ENCODE measurements at regions of chr1 and their contacts with region 1.

Region 1: DNA sequence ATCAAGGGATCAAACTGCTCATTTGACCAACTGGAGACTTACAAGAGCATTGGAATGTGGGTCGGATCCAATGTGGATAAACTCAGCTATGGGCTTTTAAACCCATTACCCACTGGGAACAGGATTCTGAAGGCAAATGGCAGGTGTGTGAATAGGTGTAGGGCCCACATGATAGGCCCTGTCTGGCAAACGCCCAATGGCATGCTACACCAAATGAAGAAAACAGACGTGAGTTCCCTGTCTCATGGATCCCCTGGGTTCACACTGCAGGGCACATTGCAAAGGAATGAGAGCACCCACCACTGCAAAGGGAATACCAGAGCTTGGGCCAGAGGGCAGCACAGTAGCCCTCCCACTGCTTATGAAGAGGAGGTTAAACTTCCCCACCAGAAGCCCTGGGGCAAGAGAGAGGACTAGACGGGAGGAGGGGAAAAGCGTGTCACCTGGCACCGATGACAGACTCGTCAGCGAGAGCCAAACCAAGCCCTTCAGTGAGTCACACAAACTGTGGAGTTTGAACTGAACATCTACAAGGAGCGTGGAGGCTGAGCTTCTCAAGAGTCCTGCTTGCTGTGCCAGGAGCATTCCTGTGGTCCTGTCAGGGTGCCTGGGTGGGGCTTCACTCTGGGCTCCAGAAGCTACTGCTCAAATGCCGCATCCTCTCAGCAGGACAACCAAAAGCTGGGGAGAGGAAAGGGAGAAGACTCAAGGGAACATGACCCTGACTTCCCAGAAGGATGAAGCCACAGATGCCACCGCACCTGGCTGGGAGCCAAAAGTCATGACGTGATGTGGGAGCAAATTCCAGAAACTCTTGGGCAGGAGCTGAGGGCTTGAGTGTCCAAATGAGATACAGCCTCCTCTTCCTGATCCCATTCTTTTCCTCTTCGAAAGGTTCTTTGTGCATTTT is 61.1 kb downstream of the TOMM20 start:
- DNase-seq: peak; percentile 100
- H3K4me3 ChIP-seq: no peak overlapping the region
- H3K27ac ChIP-seq: peak overlapping the region; percentile 97
- H3K4me1 ChIP-seq: peaks cover 43% of the 10 kb centered on the region
- H3K27me3 ChIP-seq: no peaks in the 10 kb centered on the region
- CTCF ChIP-seq: peak in 1 of 2 donors; percentile 1

Region 2: GRCh38 chr1:234862944-234863515 is 204.5 kb before region 1 on chr1:
- CTCF ChIA-PET with region 1: no interaction called
- dilution Hi-C with region 1: loop called (anchors 10 kb)
- in situ Hi-C with region 1: no loop called
- intact Hi-C with region 1: loop called (anchors 5 kb)
- DNase-seq: peak; percentile 69
- H3K4me3 ChIP-seq: no peak overlapping the region
- H3K27ac ChIP-seq: peak overlapping the region; percentile 35
- H3K4me1 ChIP-seq: peaks cover 42% of the 10 kb centered on the region
- H3K27me3 ChIP-seq: no peaks in the 10 kb centered on the region
- CTCF ChIP-seq: no peak

Region 3: DNA sequence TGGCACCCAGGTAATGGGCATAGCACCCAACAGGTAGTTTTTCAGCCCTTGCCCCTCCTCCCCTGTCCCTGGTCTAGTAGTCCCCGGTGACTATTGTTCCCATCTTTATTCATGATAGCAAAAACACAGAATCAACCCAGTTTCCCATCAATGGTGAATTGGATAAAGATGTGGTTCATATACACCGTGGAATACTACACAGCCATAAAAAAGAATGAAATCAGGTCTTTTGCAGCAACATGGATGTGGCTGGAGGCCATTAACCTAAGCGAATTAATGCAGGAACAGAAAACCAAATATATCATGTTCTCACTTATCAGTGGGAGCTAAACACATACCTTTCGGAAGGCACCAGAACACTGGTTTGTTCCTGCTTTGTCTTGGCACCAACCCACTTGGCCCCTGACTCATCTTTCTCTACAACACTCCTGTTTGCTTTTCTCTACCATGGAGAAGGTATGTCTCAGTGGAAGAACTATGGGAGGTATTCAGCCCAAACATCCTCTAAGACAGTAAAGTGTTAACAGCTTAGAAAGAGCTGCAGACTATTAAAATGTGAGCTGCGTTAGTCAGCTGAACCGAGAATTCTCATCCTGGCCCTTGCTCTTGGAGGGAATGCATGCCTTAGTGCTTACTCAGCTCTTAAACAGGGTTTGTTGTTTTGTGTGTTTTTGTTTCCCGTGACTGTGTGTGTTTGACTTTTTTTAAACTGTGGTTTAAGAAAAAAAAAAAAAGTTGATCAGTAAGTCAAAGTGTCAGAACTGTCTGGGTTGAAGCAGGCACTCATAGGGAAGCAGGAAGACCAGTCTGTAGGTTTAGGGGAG is 141.9 kb before region 1 on chr1:
- CTCF ChIA-PET with region 1: no interaction called
- dilution Hi-C with region 1: no loop called
- in situ Hi-C with region 1: no loop called
- intact Hi-C with region 1: loop called (anchors 5 kb)
- DNase-seq: peak; percentile 99
- H3K4me3 ChIP-seq: no peak overlapping the region
- H3K27ac ChIP-seq: peak overlapping the region; percentile 60
- H3K4me1 ChIP-seq: peaks cover 16% of the 10 kb centered on the region
- H3K27me3 ChIP-seq: no peaks in the 10 kb centered on the region
- CTCF ChIP-seq: no peak

Region 4: DNA sequence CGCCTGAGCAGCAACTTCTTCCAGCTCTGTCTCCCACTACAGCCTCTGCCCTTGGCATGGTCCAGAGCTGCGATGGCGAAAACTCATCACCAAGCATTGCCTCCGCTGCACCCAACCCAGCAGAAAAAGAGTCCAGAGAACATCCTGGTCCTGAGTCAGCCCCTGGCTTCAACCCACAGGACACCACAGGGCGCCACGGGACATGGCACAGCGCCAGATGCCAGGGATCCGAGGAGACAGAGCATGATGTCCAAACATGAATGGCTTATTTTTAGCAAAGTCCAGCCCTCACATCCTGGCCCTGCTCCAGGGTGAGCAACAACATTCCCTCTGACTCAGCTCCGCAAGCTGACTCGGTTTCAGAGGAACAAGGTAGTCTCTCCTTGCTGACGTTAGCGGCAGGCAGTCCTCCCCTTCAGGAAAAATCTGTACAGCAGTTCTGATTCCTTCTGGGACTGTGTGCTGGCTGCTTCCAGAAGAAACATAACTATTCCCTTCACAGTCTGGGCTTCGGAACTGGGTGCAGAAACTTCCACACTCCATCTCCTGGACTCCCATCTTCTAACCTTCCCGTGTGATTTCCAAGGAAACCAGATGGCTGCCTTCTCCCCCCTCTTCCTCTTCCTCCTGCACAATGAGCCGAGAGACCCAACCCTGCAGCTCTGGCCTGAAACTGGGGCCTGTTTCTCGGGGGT is 70.2 kb before region 1 on chr1:
- CTCF ChIA-PET with region 1: no interaction called
- dilution Hi-C with region 1: no loop called
- in situ Hi-C with region 1: loop called in 1 of 2 experiments (anchors 5 kb)
- intact Hi-C with region 1: loop called (anchors 1 kb)
- DNase-seq: peak; percentile 100
- H3K4me3 ChIP-seq: peak overlapping the region in 1 of 3 experiments; percentile 8
- H3K27ac ChIP-seq: peak overlapping the region; percentile 98
- H3K4me1 ChIP-seq: peaks cover 27% of the 10 kb centered on the region
- H3K27me3 ChIP-seq: no peaks in the 10 kb centered on the region
- CTCF ChIP-seq: peak in 1 of 2 donors; percentile 7

Region 5: DNA sequence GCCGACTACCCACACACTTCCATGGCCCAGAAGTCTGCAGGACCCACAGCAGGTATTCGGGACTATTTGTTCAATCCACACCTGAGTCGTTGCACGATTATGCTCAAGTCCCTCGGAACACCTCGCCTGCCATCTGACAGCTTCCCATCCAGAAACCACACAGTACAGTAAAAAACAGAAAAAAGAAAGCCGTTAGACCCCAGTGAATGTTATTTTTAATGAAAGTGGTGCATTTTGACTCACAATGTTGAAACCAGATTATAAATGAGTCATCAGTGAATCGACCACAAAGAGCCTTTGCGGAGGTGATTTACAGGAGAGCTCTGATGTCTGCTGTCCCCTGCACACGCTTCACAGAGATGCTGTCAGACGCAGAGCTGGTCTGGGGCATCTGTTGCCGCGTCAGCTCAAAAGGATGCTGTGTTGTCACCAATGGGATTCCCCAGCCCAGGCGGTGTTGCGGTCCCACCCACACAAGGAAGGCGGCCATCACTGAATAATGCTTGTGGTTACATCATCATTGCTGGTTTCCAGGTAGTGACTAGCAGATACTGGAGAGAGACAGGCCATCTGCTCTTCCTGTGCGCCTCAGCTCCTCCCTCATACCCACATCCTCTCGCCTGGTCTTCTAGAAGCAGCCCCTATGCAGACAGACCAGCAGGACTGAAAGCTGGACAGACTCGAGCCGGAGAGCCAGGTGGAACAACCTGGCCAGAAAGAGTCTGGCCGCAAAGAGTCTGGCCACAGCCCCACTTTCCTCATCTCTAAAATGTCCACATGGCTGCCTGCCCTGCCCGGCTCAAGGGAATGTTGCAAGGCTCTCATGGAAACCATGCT is 55.7 kb before region 1 on chr1:
- CTCF ChIA-PET with region 1: no interaction called
- dilution Hi-C with region 1: loop called (anchors 5 kb)
- in situ Hi-C with region 1: loop called in 1 of 2 experiments (anchors 5 kb)
- intact Hi-C with region 1: loop called (anchors 1 kb)
- DNase-seq: peak; percentile 100
- H3K4me3 ChIP-seq: no peak overlapping the region
- H3K27ac ChIP-seq: peak overlapping the region; percentile 97
- H3K4me1 ChIP-seq: peaks cover 20% of the 10 kb centered on the region
- H3K27me3 ChIP-seq: no peaks in the 10 kb centered on the region
- CTCF ChIP-seq: no peak

Region 6: DNA sequence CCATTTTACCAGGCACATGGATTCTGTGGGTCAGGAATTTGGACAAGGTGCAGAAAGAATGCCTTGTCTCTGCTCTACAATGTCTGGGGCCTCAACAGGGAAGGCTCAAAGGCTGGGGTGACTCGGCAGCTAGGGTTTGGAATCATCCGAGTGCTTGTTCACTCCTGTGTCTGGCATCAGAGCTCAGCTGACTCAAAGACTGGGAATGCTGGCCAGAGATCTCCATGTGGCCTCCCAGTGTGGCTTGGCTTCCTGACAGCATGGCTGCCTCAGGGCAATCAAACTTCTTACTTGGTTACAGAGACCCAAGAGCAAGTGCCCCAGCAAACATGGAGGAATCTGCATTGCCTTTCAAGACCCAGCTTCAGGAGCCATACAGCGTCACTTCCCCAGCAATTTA is 49.4 kb before region 1 on chr1:
- CTCF ChIA-PET with region 1: no interaction called
- dilution Hi-C with region 1: loop called (anchors 5 kb)
- in situ Hi-C with region 1: loop called in 1 of 2 experiments (anchors 5 kb)
- intact Hi-C with region 1: loop called (anchors 2 kb)
- DNase-seq: peak; percentile 99
- H3K4me3 ChIP-seq: no peak overlapping the region
- H3K27ac ChIP-seq: peak overlapping the region; percentile 92
- H3K4me1 ChIP-seq: peaks cover 26% of the 10 kb centered on the region
- H3K27me3 ChIP-seq: no peaks in the 10 kb centered on the region
- CTCF ChIP-seq: no peak